ENCODE measurements at regions of chr3 and their contacts with region 1.

Region 1: GRCh38 chr3:173411375-173411973 is 13.9 kb downstream of the NLGN1 start:
- DNase-seq: no peak
- ATAC-seq: peak; percentile 48
- H3K4me3 Mint-ChIP-seq: no peak overlapping the region
- H3K27ac Mint-ChIP-seq: no peak overlapping the region
- H3K4me1 Mint-ChIP-seq: peaks cover 46% of the 10 kb centered on the region
- H3K27me3 Mint-ChIP-seq: no peaks in the 10 kb centered on the region
- CTCF ChIP-seq: no peak

Region 2: DNA sequence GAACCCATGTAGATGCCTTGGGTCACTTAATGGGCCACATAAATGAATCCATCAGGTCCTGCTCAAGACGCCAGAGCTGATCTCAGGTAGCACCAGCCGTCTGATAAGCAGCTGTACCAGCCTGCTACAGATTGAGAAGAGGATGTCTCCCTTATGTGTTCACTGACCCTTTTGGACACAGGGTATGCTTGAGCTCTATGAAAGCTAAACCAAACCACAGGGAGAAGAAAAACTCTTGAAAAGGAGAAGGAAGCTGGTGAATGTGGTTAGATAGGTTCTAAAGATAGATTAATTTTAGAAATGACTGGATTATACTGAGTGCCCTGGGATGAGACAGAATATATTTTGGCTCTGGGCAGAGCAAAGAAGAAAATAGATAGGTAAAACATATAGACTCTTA is 457.9 kb before region 1 on chr3:
- CTCF ChIA-PET with region 1: no interaction called
- POLR2A ChIA-PET with region 1: no interaction called
- DNase-seq: no peak
- ATAC-seq: no peak
- H3K4me3 Mint-ChIP-seq: no peak overlapping the region
- H3K27ac Mint-ChIP-seq: no peak overlapping the region
- H3K4me1 Mint-ChIP-seq: peaks cover 8% of the 10 kb centered on the region
- H3K27me3 Mint-ChIP-seq: no peaks in the 10 kb centered on the region
- CTCF ChIP-seq: no peak

Region 3: GRCh38 chr3:173304182-173304800 is 107.2 kb before region 1 on chr3:
- CTCF ChIA-PET with region 1: no interaction called
- POLR2A ChIA-PET with region 1: no interaction called
- DNase-seq: no peak
- ATAC-seq: no peak
- H3K4me3 Mint-ChIP-seq: no peak overlapping the region
- H3K27ac Mint-ChIP-seq: no peak overlapping the region
- H3K4me1 Mint-ChIP-seq: peaks cover 32% of the 10 kb centered on the region
- H3K27me3 Mint-ChIP-seq: no peaks in the 10 kb centered on the region
- CTCF ChIP-seq: no peak

Region 4: GRCh38 chr3:173395412-173396181 is 15.9 kb before region 1 on chr3:
- CTCF ChIA-PET with region 1: interaction called, 13 read pairs
- POLR2A ChIA-PET with region 1: no interaction called
- DNase-seq: peak; percentile 85
- ATAC-seq: peak; percentile 77
- H3K4me3 Mint-ChIP-seq: peak overlapping the region; percentile 98
- H3K27ac Mint-ChIP-seq: peak overlapping the region; percentile 94
- H3K4me1 Mint-ChIP-seq: peaks cover 31% of the 10 kb centered on the region
- H3K27me3 Mint-ChIP-seq: peaks cover 9% of the 10 kb centered on the region
- CTCF ChIP-seq: no peak